Aorta (tissue), 5 donors: ENCODE measurements at regions of chr3 and their contacts with region 1.

Region 1: DNA sequence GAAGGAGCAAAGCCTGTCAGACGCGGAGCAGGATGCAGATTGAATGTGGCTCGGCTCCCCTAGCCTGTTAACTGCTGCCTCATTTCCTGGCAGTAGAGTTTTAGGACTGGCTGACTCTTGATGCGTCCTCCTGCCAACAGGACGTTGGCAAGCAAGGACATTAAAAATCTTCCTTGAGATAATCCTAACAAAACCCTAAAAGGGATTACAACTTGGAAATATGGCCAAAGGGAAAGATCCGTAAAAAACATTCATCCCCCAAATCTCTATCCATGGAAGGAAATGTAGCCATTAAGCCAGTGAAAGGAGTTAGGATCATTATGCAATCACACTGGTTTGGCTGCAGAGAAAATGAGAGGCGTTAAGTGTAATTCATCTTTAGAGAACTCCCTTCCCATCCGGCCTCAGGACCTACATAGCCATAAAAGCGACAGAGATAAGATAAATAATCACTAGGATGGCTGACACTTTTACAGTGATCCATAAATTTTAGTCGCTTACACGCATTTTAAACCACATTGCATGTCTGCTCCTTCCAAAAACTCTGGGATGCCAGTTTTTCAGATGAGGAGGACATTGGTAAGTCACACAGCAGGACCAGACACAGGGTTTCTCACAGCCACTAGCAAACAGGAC is 44.5 kb upstream of the C3orf80 start:
- DNase-seq: peak in 1 of 2 donors; percentile 49
- ATAC-seq: peak; percentile 81
- H3K4me3 ChIP-seq: no peak overlapping the region
- H3K27ac ChIP-seq: no peak overlapping the region
- H3K4me1 ChIP-seq: peaks cover 0 to 8% of the 10 kb centered on the region in 2 donors
- H3K27me3 ChIP-seq: no peaks in the 10 kb centered on the region

Region 2: DNA sequence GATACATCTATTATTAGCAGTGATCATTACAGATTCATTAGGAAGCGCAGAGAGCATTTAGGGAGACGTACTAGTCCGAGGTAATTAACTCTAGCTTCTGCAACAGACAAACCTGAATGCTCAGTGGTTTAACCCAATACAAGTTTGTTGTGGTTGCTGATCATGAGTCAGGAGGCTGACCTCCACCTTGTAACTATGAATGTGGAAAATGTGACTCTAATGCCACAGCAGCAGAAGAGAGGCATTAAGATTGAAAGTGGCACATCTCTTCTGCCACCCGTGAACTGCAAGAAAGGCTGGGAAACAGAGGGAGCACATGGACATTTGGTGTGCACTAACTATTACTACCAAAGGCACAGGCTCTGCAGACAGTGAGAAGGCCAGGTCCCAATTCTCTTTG is 26.7 kb before region 1 on chr3:
- intact Hi-C with region 1: loop called in 1 of 2 experiments (anchors 1 kb)
- DNase-seq: no peak
- ATAC-seq: no peak
- H3K4me3 ChIP-seq: no peak overlapping the region
- H3K27ac ChIP-seq: no peak overlapping the region
- H3K4me1 ChIP-seq: peaks cover 0 to 3% of the 10 kb centered on the region in 2 donors
- H3K27me3 ChIP-seq: no peaks in the 10 kb centered on the region